ENCODE measurements at regions of chr15 and their contacts with region 1.

Region 1: DNA sequence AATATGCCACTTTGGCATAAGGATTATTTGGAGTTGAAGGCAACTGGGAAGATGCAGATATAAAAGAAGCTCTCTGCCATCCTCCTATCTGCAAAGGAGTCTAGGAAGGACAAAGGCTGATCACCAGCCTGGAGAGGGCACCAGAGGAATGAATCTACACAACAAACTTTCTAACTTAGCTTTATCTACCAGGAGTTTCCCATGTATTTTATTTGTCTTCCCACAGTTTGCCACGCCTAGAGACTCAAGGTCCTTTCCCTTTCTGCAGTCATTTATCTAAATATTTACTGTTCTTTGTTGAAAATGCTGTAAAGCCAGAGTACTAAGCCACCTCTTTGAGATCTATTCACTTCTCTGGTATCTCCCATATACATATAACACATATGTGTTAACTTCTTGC is 32.2 kb downstream of the GPR176 start:
- DNase-seq: no peak
- ATAC-seq: peak in 4 of 8 donors; percentile 48 to 63 (median 54)
- H3K4me3 ChIP-seq: no peak overlapping the region
- H3K27ac ChIP-seq: no peak overlapping the region
- H3K4me1 ChIP-seq: no peaks in the 10 kb centered on the region
- H3K27me3 ChIP-seq: peaks cover 0 to 4% (median 0%) of the 10 kb centered on the region in 7 donors
- CTCF ChIP-seq: peak in 6 of 9 donors; percentile 20 to 55 (median 47)

Region 2: DNA sequence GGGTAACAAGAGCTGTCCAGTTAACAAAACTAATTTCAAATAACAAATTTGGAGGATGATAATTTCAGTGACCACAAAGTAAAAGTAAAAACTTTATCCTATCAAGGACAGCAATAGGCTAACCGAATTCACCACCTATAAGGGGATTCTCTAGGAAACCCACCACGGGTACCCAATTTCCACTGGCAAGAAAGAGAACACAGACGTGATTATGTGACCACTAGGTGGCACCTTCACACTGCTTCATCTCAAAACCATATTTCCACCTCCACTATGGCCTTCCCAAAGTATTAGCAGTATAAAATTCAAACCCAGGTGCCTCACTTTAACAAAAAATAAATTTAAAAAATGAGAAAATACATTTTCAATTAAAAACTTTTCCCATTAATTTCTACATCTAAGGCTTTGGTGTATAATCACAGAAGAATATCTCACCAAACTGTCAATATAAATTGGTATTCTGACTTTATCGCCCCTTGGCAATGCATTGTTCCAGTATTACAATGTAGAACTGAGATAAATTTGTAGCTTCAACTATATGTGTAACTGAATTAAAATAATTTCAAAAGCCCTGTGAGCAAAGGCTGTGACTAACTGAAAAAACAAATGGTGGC is 201.7 kb before region 1 on chr15:
- intact Hi-C with region 1: loop called in 1 of 10 experiments (anchors 10 kb)
- DNase-seq: peak in 1 of 2 donors; percentile 32
- ATAC-seq: peak in 6 of 8 donors; percentile 59 to 78 (median 66)
- H3K4me3 ChIP-seq: no peak overlapping the region
- H3K27ac ChIP-seq: no peak overlapping the region
- H3K4me1 ChIP-seq: no peaks in the 10 kb centered on the region
- H3K27me3 ChIP-seq: no peaks in the 10 kb centered on the region
- CTCF ChIP-seq: peak; percentile 55 to 88 (median 84)

Region 3: GRCh38 chr15:39934397-39935071 is 46.7 kb after region 1 on chr15:
- intact Hi-C with region 1: loop called in 1 of 10 experiments (anchors 10 kb)
- DNase-seq: no peak
- ATAC-seq: peak in 3 of 8 donors; percentile 4 to 13 (median 10)
- H3K4me3 ChIP-seq: peak overlapping the region; percentile 47 to 89 (median 74)
- H3K27ac ChIP-seq: peak overlapping the region; percentile 8 to 95 (median 88)
- H3K4me1 ChIP-seq: peaks cover 3 to 54% (median 37%) of the 10 kb centered on the region in 9 donors
- H3K27me3 ChIP-seq: no peaks in the 10 kb centered on the region
- CTCF ChIP-seq: no peak

Region 4: GRCh38 chr15:39959411-39959810 is 71.6 kb after region 1 on chr15:
- intact Hi-C with region 1: loop called in 1 of 10 experiments (anchors 10 kb)
- DNase-seq: no peak
- ATAC-seq: no peak
- H3K4me3 ChIP-seq: no peak overlapping the region
- H3K27ac ChIP-seq: no peak overlapping the region
- H3K4me1 ChIP-seq: no peaks in the 10 kb centered on the region
- H3K27me3 ChIP-seq: no peaks in the 10 kb centered on the region
- CTCF ChIP-seq: no peak

Region 5: GRCh38 chr15:40182358-40183029 is 294.7 kb after region 1 on chr15:
- intact Hi-C with region 1: loop called in 1 of 10 experiments (anchors 10 kb)
- DNase-seq: no peak
- ATAC-seq: no peak
- H3K4me3 ChIP-seq: no peak overlapping the region
- H3K27ac ChIP-seq: peak overlapping the region in 1 of 10 donors; percentile 21
- H3K4me1 ChIP-seq: peaks cover 0 to 15% (median 0%) of the 10 kb centered on the region in 9 donors
- H3K27me3 ChIP-seq: no peaks in the 10 kb centered on the region
- CTCF ChIP-seq: no peak